ENCODE measurements at regions of chr3 and their contacts with region 1.

Region 1: GRCh38 chr3:115321400-115321805 is 174.3 kb upstream of the ZBTB20 start:
- DNase-seq: peak; percentile 97
- H3K4me3 ChIP-seq: no peak overlapping the region
- H3K27ac ChIP-seq: no peak overlapping the region
- H3K4me1 ChIP-seq: peaks cover 32% of the 10 kb centered on the region
- H3K27me3 ChIP-seq: no peaks in the 10 kb centered on the region
- CTCF ChIP-seq: no peak

Region 2: DNA sequence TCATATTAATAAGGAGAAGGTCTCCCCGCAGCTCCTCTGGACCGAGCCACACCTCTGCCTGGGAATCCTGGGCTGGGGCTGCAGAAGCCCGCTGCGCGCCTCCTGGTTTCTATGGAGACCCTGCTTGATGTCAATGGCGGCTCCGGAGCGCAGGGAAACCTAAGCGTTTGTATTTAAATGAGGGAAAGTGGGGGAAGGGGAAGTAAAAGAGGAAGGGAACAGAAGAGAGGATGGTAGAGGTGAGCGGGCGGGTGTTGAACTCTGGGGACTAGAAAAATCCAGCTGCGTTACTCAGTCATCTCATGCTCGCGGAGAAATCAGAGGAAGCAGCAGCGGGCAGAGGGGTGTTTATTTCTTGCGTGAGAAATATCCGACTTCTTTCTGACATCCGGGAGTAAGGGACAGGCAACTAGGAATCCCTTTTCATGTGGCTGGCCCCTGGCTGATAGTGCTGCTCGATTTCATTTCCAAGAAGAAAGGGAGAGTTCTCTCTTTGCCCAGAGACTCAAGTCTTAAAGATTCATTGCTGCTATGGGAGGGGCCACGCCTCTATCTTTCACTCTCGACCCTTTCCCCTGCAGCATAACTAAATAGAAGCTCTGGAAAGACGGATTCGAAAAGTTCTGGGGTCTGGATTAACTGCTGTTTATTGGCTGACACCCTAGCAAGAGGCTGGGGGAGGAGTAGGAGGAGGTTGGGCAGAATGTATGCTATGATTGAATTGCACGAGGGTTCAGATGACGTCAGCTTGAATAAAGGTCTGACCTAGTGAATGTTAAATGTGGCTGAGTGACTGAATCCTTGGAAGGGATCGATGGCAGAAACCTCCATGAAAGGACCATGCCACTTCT is 191.4 kb after region 1 on chr3:
- CTCF ChIA-PET with region 1: no interaction called
- POLR2A ChIA-PET with region 1: no interaction called
- intact Hi-C with region 1: loop called (anchors 5 kb)
- DNase-seq: peak; percentile 89
- H3K4me3 ChIP-seq: peak overlapping the region; percentile 52
- H3K27ac ChIP-seq: peak overlapping the region; percentile 61
- H3K4me1 ChIP-seq: peaks cover 14% of the 10 kb centered on the region
- H3K27me3 ChIP-seq: no peaks in the 10 kb centered on the region
- CTCF ChIP-seq: no peak

Measured in A673 (cell line).